Psoas muscle (tissue), 8 donors: ENCODE measurements at regions of chr17 and their contacts with region 1.

Region 1: DNA sequence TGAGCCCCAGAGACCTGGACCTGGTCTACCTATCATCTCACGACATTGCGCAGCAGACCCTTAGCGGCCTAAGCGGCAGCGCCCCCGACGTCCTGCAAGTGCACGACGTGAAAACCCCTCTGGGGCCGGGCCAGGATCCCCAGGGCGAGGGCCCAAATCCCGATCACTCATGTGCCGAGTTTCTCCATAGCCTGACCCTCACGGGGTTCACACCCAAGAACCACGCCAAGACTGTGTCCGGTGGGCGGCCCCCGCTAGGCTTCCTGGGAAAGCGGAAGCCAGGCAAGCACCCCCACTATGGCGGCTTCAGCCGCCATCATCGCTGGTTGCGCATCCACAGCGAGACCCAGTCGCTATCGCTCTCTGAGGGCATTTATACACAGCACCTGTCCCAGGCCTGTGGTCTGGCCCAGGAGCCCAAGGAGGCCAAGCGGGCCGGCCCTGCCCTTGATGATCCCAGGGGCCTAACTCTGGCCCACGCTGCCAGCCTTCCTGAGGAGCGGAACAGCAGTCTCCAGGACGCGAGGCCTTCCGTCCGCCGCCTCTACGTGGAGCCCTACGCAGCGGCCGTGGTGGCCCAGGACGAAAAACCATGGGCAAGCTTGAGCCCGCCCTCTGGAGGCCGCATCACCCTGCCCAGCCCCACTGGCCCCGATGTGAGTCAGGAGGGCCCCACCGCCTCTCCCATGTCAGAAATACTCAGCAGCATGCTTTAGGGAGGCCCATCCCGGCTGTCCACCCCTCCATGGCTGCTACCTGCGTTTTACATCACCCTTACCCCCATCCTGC is 82.8 kb upstream of the NOG start:
- DNase-seq: peak in 1 of 2 donors; percentile 44
- ATAC-seq: no peak
- H3K4me3 ChIP-seq: no peak overlapping the region
- H3K27ac ChIP-seq: no peak overlapping the region
- H3K4me1 ChIP-seq: no peaks in the 10 kb centered on the region
- H3K27me3 ChIP-seq: no peaks in the 10 kb centered on the region
- CTCF ChIP-seq: no peak

Region 2: GRCh38 chr17:56570199-56570598 is 59.5 kb after region 1 on chr17:
- intact Hi-C with region 1: loop called in 1 of 2 experiments (anchors 5 kb)
- DNase-seq: no peak
- ATAC-seq: no peak
- H3K4me3 ChIP-seq: no peak overlapping the region
- H3K27ac ChIP-seq: no peak overlapping the region
- H3K4me1 ChIP-seq: no peaks in the 10 kb centered on the region
- H3K27me3 ChIP-seq: peaks cover 0 to 2% (median 0%) of the 10 kb centered on the region in 3 donors
- CTCF ChIP-seq: no peak